ENCODE measurements at regions of chr20 and their contacts with region 1.

Region 1: GRCh38 chr20:21933526-21933925 is 228.1 kb downstream of the PAX1 start:
- DNase-seq: no peak
- ATAC-seq: no peak
- H3K4me3 ChIP-seq: no peak overlapping the region
- H3K27ac ChIP-seq: no peak overlapping the region
- H3K4me1 ChIP-seq: no peaks in the 10 kb centered on the region
- H3K27me3 ChIP-seq: no peaks in the 10 kb centered on the region
- CTCF ChIP-seq: no peak
- EP300 ChIP-seq: no peak
- POLR2A ChIP-seq: no peak
- RAD21 ChIP-seq: no peak

Region 2: GRCh38 chr20:21967481-21967880 is 34.0 kb after region 1 on chr20:
- CTCF ChIA-PET with region 1: no interaction called
- POLR2A ChIA-PET with region 1: no interaction called
- RAD21 ChIA-PET with region 1: no interaction called
- SMC1A ChIA-PET with region 1: no interaction called
- in situ Hi-C with region 1: no loop called
- intact Hi-C with region 1: no loop called
- DNase-seq: no peak
- ATAC-seq: no peak
- H3K4me3 ChIP-seq: no peak overlapping the region
- H3K27ac ChIP-seq: no peak overlapping the region
- H3K4me1 ChIP-seq: no peaks in the 10 kb centered on the region
- H3K27me3 ChIP-seq: no peaks in the 10 kb centered on the region
- CTCF ChIP-seq: no peak
- EP300 ChIP-seq: no peak
- POLR2A ChIP-seq: no peak
- RAD21 ChIP-seq: no peak

Region 3: DNA sequence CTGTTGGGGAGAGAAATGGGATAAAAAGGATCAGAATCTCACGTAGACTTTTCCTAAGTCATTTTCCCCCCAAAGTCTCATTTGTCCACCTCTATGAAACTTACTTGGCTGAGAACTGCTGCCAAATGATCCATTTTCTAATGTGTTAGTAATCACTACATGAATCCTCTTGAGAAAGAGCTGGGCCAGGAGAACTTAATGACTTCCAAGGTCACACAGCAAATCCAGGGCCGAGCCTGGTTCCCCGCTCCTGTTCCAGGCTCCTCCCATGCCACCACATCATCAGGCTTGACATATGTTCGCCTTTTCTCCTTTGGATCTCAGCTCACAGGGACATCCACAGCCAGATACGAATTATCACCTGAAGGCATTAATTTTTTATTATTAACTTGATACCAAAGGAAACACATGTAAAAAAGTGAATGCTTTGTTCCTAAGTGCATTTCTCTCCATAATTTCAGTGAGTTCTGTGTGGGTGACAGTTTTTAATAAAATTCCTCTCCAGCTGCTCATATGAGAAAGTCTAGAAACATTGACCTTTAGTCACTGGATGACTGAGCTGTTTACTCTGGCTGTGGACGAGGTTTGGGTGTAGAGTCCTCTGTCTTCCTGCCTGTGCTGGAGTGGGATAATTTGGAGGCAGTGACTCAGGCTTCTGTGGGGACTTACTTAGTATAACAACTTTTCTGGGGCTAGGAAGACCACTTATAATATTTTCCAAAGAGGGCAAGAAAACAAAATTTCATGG is 48.2 kb after region 1 on chr20:
- CTCF ChIA-PET with region 1: no interaction called
- POLR2A ChIA-PET with region 1: no interaction called
- RAD21 ChIA-PET with region 1: no interaction called
- SMC1A ChIA-PET with region 1: no interaction called
- in situ Hi-C with region 1: loop called (anchors 5 kb)
- intact Hi-C with region 1: no loop called
- DNase-seq: no peak
- ATAC-seq: no peak
- H3K4me3 ChIP-seq: no peak overlapping the region
- H3K27ac ChIP-seq: no peak overlapping the region
- H3K4me1 ChIP-seq: no peaks in the 10 kb centered on the region
- H3K27me3 ChIP-seq: no peaks in the 10 kb centered on the region
- CTCF ChIP-seq: no peak
- EP300 ChIP-seq: no peak
- POLR2A ChIP-seq: no peak
- RAD21 ChIP-seq: no peak